Body of pancreas (tissue), 4 donors: ENCODE measurements at regions of chr3 and their contacts with region 1.

Region 1: GRCh38 chr3:138594935-138595610 is 1.0 kb upstream of the CEP70 start:
- DNase-seq: no peak
- ATAC-seq: no peak
- H3K4me3 ChIP-seq: no peak overlapping the region
- H3K27ac ChIP-seq: peak overlapping the region; percentile 92 to 98 (median 97)
- H3K4me1 ChIP-seq: peaks cover 64% of the 10 kb centered on the region
- H3K27me3 ChIP-seq: no peaks in the 10 kb centered on the region
- CTCF ChIP-seq: no peak
- POLR2A ChIP-seq: no peak

Region 2: GRCh38 chr3:138300647-138301046 is 294.4 kb before region 1 on chr3:
- intact Hi-C with region 1: no loop called
- DNase-seq: no peak
- ATAC-seq: no peak
- H3K4me3 ChIP-seq: no peak overlapping the region
- H3K27ac ChIP-seq: no peak overlapping the region
- H3K4me1 ChIP-seq: peaks cover 4% of the 10 kb centered on the region
- H3K27me3 ChIP-seq: no peaks in the 10 kb centered on the region
- CTCF ChIP-seq: no peak
- POLR2A ChIP-seq: no peak

Region 3: DNA sequence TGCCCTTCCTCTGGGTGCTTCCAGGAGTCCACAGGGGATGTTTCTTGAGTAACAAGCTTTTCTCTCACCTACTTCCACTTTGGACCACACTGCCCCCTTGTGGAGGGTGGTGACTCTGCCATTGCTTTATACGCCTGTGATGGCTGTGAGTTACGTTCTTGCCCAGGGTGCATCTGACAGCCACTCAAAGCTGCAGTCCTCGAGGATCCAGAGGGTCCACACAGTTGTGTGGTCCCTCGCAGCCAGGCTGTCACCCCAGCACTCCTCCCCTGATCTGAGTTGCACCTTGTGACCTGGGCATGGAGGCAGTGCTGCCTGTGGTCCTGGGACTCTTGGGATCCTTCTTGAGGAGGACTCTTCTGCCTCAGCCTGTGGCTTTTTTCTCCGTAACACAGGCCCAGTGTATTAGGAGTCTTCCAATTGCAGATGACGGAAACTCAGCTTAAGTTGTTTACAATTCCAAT is 328.5 kb after region 1 on chr3:
- intact Hi-C with region 1: loop called (anchors 5 kb)
- DNase-seq: peak; percentile 87 to 91 (median 90)
- ATAC-seq: peak; percentile 91
- H3K4me3 ChIP-seq: no peak overlapping the region
- H3K27ac ChIP-seq: no peak overlapping the region
- H3K4me1 ChIP-seq: no peaks in the 10 kb centered on the region
- H3K27me3 ChIP-seq: no peaks in the 10 kb centered on the region
- CTCF ChIP-seq: peak; percentile 80 to 92 (median 90)
- POLR2A ChIP-seq: no peak